PC-3 (cell line): ENCODE measurements at regions of chr17 and their contacts with region 1.

Region 1: GRCh38 chr17:8091033-8091687 is 3.6 kb upstream of the ALOX12B start:
- DNase-seq: no peak
- ATAC-seq: no peak
- H3K4me3 ChIP-seq: no peak overlapping the region
- H3K27ac ChIP-seq: no peak overlapping the region
- H3K4me1 ChIP-seq: no peaks in the 10 kb centered on the region
- H3K27me3 ChIP-seq: no peaks in the 10 kb centered on the region
- CTCF ChIP-seq: no peak

Region 2: DNA sequence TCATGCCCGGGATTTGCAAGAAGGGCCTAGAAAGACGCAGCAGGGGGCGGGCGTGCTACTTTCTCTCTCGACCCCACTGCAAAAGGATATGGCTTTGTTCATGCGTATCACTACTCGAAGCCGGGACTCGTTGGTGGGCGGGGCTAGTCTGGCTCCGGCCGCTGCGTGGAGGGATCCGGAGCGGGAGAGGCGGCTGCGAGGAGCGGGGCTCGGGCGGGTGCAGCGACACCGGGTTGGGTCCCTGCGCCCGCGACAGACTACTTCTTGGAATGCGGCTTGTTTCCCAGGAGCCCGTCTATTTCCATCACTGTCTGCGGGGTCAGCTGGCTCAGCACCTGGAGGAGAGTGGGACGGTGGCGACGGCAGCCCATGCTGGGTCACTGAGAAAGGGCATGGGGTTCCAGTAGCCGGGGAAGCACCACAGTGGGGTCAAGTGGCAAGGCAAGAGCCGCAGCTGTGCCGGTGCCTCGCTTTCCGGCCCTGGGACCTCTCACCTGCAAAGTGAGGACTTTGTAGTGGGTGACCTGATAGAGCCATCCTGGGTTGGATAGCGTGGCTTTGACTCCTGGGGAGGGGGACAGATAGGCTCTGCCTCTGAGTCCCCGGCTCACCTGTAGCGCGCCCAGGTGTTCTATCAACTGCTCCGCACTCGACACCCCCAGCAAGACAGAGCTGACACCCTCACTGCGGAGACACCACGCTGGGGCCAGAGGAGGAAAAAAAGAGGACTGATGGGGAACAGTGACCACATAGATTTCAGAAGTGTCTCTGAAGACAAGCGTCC is 168.1 kb before region 1 on chr17:
- CTCF ChIA-PET with region 1: no interaction called
- POLR2A ChIA-PET with region 1: no interaction called
- intact Hi-C with region 1: no loop called
- DNase-seq: no peak
- ATAC-seq: no peak
- H3K4me3 ChIP-seq: no peak overlapping the region
- H3K27ac ChIP-seq: no peak overlapping the region
- H3K4me1 ChIP-seq: no peaks in the 10 kb centered on the region
- H3K27me3 ChIP-seq: no peaks in the 10 kb centered on the region
- CTCF ChIP-seq: no peak

Region 3: GRCh38 chr17:7982666-7983065 is 108.5 kb before region 1 on chr17:
- CTCF ChIA-PET with region 1: no interaction called
- POLR2A ChIA-PET with region 1: no interaction called
- intact Hi-C with region 1: no loop called
- DNase-seq: peak; percentile 51
- ATAC-seq: peak; percentile 83
- H3K4me3 ChIP-seq: peak overlapping the region; percentile 44
- H3K27ac ChIP-seq: peak overlapping the region; percentile 61
- H3K4me1 ChIP-seq: peaks cover 12% of the 10 kb centered on the region
- H3K27me3 ChIP-seq: no peaks in the 10 kb centered on the region
- CTCF ChIP-seq: peak; percentile 51; the same call in 1 of the 2 replicates

Region 4: DNA sequence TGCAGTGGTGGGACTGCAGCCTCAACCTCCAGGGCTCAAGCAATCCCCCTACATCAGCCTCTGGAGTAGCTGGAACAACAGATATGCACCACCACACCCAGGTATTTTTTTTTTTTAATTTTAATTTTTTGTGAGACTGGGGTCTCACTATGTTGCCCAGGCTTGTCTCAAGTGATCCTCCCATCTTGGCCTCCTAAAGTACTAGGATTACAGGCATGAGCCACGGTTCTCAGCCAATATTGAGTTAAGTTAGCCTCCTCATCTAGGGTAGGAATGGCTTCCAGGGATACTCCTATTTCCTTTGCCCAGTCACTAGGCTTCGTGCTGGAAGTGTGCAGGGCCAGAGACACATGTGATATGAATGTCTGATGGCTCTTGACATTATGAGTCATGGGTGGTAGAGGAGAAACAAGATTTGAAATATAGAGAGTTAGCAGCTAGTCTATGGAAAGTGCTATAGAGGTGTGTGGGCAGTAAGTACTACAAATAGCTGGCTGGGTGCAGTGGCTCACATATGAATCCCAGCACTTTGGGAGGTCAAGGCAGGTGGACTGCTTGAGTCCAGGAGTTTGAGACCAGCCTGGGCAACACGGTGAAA is 40.8 kb after region 1 on chr17:
- CTCF ChIA-PET with region 1: no interaction called
- POLR2A ChIA-PET with region 1: no interaction called
- intact Hi-C with region 1: no loop called
- DNase-seq: peak; percentile 37
- ATAC-seq: 0 out of 2 replicates have a peak, but pooled peaks have one; percentile 37
- H3K4me3 ChIP-seq: no peak overlapping the region
- H3K27ac ChIP-seq: no peak overlapping the region
- H3K4me1 ChIP-seq: 0 out of 2 replicates have a peak, but pooled peaks cover 4% of the 10 kb centered on the region
- H3K27me3 ChIP-seq: no peaks in the 10 kb centered on the region
- CTCF ChIP-seq: no peak

Region 5: GRCh38 chr17:8162233-8162996 is 71.3 kb after region 1 on chr17 and contains the start of gene VAMP2:
- CTCF ChIA-PET with region 1: no interaction called
- POLR2A ChIA-PET with region 1: no interaction called
- intact Hi-C with region 1: no loop called
- DNase-seq: peak; percentile 60
- ATAC-seq: peak; percentile 51
- H3K4me3 ChIP-seq: peak within 1 kb of the TSS; percentile 88
- H3K27ac ChIP-seq: peak within 1 kb of the TSS; percentile 59
- H3K4me1 ChIP-seq: peaks cover 27% of the 10 kb centered on the region
- H3K27me3 ChIP-seq: no peaks in the 10 kb centered on the region
- CTCF ChIP-seq: no peak
- total RNA-seq, gene VAMP2: 5.0 and 18.0 TPM in 2 replicates

Region 6: GRCh38 chr17:8859027-8859803 is 768.1 kb after region 1 on chr17:
- CTCF ChIA-PET with region 1: no interaction called
- POLR2A ChIA-PET with region 1: interaction called, 12 read pairs
- intact Hi-C with region 1: no loop called
- DNase-seq: no peak
- ATAC-seq: no peak
- H3K4me3 ChIP-seq: no peak overlapping the region
- H3K27ac ChIP-seq: no peak overlapping the region
- H3K4me1 ChIP-seq: no peaks in the 10 kb centered on the region
- H3K27me3 ChIP-seq: peaks cover 17% of the 10 kb centered on the region
- CTCF ChIP-seq: no peak